ENCODE measurements at regions of chr7 and their contacts with region 1.

Region 1: DNA sequence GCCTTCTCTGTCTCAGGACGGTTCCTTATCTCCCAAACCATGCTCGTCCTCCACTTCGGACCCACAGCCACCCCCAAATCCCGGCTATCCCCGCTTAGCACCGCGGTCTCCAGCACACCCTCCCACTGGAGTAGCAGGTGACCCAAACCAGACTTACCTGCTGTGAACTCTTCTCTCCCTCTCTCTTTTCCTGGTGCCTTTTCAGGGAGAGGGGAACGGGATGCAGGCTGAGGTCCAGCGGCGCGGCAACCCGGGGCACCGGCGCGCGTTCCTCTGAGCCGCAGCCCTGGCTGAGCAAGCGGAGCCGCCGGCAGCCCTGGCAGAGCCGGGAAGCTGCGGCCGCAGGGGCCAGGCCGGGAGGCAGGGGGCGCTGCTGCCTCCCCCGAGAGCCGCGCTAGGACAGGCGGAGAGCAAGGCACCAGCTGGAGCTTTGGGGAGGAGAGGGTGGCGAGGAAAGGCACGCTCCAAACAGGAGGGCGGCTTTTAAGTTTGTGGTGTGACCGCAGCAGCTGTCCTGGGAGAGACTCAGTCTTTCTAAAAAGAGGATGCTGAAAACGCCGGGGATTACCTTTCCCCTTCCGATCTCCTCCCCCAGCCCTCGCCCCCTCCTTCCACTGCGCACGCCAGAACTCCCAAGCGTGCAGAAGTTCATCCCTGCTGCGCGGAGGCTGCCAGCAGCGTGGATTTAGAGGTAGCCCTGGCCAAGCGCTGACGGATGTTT is at the start of gene SEMA3D:
- DNase-seq: peak; percentile 94
- H3K4me3 ChIP-seq: peak within 1 kb of the TSS; percentile 76
- H3K27ac ChIP-seq: peak within 1 kb of the TSS; percentile 39; the same call in 1 of the 2 replicates
- H3K4me1 ChIP-seq: 0 out of 2 replicates have a peak, but pooled peaks cover 4% of the 10 kb centered on the region
- H3K27me3 ChIP-seq: 0 out of 2 replicates have a peak, but pooled peaks cover 3% of the 10 kb centered on the region
- total RNA-seq, gene SEMA3D: 6.6 and 10.1 TPM in 2 replicates

Region 2: GRCh38 chr7:83936056-83936708 is 1250.5 kb before region 1 on chr7:
- in situ Hi-C with region 1: loop called (anchors 25 kb)
- DNase-seq: peak; percentile 77
- H3K4me3 ChIP-seq: no peak overlapping the region
- H3K27ac ChIP-seq: no peak overlapping the region
- H3K4me1 ChIP-seq: no peaks in the 10 kb centered on the region
- H3K27me3 ChIP-seq: no peaks in the 10 kb centered on the region

Region 3: DNA sequence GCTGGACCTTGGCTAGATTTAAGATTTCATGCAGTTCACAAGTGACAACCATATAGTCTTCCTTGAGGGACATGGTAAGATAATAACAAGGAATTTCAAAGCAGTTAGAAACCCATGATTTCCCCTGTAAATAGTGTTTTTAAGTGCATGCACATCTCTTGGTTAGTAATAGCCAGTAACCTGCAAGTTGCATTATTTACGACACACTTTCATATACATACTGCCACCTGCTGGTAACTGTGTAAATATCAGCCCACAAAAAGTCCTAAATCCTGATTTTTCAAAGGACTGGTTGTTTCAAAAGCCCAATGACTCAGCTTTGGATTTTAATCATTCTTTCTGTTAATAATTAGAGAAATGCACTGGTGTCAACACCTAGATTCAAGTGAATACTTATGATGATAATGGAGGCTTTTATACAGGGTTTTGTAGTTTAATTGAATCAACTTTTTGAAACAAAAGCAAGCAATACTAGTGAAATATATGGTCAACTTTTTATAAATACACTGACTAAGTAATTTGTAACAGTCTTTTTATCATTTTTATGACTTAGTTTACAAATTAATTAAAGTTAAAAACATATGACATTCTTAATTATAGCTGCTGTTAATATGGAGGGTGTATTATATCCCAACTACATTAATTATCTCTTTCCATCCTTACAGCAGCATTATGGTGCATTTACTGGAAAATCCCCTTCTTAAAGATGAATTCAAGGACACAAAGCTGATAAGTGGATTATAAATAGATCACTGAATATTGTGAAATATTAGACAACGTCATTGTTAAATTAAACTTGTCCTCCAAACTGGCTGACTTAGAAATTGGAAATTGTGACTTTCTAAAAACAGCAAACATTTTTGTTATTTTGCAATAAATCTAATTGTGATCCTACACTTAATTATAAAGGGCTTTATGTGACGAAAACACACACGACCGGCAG is 367.8 kb after region 1 on chr7:
- in situ Hi-C with region 1: loop called (anchors 10 kb)
- DNase-seq: peak; percentile 80
- H3K4me3 ChIP-seq: no peak overlapping the region
- H3K27ac ChIP-seq: no peak overlapping the region
- H3K4me1 ChIP-seq: peaks cover 15% of the 10 kb centered on the region
- H3K27me3 ChIP-seq: no peaks in the 10 kb centered on the region